CD8-positive, alpha-beta memory T cell (primary cell): ENCODE measurements at regions of chr1 and their contacts with region 1.

Region 1: DNA sequence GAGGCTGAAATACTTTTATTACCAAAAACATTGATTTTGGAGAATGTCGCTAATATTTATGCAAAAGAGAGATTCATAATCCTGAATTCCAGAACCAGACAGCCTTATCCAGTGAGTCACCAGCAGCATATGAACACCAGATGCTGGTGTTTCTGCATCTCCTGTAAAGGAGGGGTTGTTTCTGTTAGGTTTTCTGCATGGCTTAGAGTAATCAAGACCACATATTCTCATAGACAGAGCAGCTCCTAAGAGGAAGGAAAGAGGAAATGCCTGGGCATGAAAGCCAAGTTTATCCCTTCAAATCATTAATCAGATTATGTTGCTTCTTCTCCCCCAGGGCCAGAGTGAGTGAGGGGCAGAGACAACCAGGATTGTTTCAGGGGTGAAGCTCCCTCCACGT is 86.2 kb downstream of the NGF start:
- DNase-seq: no peak
- H3K4me3 ChIP-seq: no peak overlapping the region
- H3K4me3 Mint-ChIP-seq: no peak overlapping the region
- H3K27ac ChIP-seq: no peak overlapping the region
- H3K27ac Mint-ChIP-seq: no peak overlapping the region
- H3K4me1 ChIP-seq: no peaks in the 10 kb centered on the region
- H3K4me1 Mint-ChIP-seq: no peaks in the 10 kb centered on the region
- H3K27me3 ChIP-seq: no peaks in the 10 kb centered on the region
- H3K27me3 Mint-ChIP-seq: peaks cover 10 to 13% of the 10 kb centered on the region in 2 donors

Region 2: DNA sequence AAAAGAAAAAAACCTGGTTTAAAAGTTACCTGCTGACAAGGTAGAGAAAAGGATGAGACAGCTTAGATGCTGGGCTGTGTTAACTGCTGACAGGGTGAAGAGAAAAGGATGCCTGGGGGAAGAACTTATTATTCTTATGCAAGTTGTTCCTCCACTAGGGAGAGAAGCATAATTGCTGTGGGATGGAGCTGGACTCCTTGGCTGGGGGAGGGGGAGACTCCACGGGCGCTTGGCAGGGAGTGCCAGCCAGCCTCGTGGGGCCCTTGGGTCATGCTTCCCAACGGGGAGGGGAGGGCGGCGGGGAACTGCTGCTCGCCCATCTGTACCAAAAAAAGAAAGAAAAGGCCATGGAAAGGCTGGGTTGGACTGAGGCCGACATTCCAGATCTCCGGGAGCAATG is 350.0 kb before region 1 on chr1:
- CTCF ChIA-PET with region 1: no interaction called
- POLR2A ChIA-PET with region 1: no interaction called
- DNase-seq: no peak
- H3K4me3 ChIP-seq: no peak overlapping the region
- H3K4me3 Mint-ChIP-seq: no peak overlapping the region
- H3K27ac ChIP-seq: no peak overlapping the region
- H3K27ac Mint-ChIP-seq: peak overlapping the region in 1 of 8 donors; percentile 17
- H3K4me1 ChIP-seq: no peaks in the 10 kb centered on the region
- H3K4me1 Mint-ChIP-seq: no peaks in the 10 kb centered on the region
- H3K27me3 ChIP-seq: no peaks in the 10 kb centered on the region
- H3K27me3 Mint-ChIP-seq: peaks cover 13 to 21% of the 10 kb centered on the region in 2 donors

Region 3: DNA sequence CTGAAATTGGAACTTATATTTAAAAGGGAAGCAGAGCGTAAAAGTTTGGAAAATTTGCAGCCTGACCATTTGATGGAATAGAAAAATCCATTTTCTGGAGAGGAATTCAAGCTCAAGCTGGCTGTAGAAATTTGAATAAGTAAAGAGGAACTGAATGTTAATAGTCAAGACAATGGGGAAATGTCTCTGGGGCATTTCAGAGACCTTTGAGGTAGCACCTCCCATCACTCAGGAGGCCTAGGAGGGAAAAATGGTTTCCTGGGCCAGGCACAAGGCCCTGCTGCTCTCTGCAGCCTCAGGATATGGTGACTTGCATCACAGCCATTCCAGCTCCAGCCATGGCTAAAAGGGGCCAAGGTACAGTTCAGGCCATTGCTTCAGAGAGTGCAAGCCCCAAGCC is 239.8 kb before region 1 on chr1:
- CTCF ChIA-PET with region 1: no interaction called
- POLR2A ChIA-PET with region 1: no interaction called
- DNase-seq: no peak
- H3K4me3 ChIP-seq: no peak overlapping the region
- H3K4me3 Mint-ChIP-seq: no peak overlapping the region
- H3K27ac ChIP-seq: no peak overlapping the region
- H3K27ac Mint-ChIP-seq: no peak overlapping the region
- H3K4me1 ChIP-seq: no peaks in the 10 kb centered on the region
- H3K4me1 Mint-ChIP-seq: no peaks in the 10 kb centered on the region
- H3K27me3 ChIP-seq: no peaks in the 10 kb centered on the region
- H3K27me3 Mint-ChIP-seq: peaks cover 1 to 8% of the 10 kb centered on the region in 2 donors

Region 4: GRCh38 chr1:115156826-115157468 is 94.9 kb before region 1 on chr1:
- CTCF ChIA-PET with region 1: no interaction called
- POLR2A ChIA-PET with region 1: interaction called, 10 read pairs
- DNase-seq: no peak
- H3K4me3 ChIP-seq: no peak overlapping the region
- H3K4me3 Mint-ChIP-seq: no peak overlapping the region
- H3K27ac ChIP-seq: no peak overlapping the region
- H3K27ac Mint-ChIP-seq: no peak overlapping the region
- H3K4me1 ChIP-seq: no peaks in the 10 kb centered on the region
- H3K4me1 Mint-ChIP-seq: no peaks in the 10 kb centered on the region
- H3K27me3 ChIP-seq: no peaks in the 10 kb centered on the region
- H3K27me3 Mint-ChIP-seq: no peaks in the 10 kb centered on the region

Region 5: DNA sequence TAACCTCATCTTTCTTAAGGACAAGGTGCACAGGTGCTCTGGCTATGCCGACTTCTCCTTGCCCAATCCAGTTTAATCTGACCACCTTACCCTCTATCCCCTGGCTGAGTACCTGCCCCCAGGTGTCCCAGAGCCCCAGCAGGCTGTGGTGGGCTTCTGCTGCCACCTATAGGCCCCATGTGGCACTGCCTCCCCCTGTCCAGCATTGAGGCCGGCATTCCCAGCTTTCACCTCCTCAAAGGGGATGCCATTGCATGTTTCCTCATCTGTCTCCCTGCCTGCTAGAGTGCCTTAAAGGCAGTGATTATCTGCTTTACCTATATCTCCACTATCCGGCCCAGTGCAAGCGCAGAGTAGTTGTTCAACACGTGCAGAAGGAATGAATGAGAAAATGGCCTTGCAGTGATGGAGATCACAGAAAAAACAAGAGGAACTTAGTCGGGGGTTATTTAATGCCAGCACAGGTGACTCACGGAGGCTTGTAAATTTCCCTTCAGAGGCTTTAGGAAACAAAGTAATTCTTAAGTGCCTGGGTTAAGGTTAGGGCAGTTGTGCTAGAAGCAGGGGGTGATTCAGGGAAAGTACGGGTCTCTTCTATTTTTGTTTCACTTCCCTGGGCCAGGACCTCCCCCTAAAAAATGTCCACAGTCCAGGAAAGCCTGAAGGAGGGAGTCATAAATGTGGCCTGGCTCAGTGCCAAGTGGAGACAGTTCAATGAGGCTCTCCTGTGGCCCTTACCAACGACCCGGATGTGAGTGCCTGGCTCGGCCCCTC is 218.0 kb after region 1 on chr1:
- CTCF ChIA-PET with region 1: no interaction called
- POLR2A ChIA-PET with region 1: no interaction called
- DNase-seq: peak in 1 of 5 donors; percentile 14
- H3K4me3 ChIP-seq: no peak overlapping the region
- H3K4me3 Mint-ChIP-seq: no peak overlapping the region
- H3K27ac ChIP-seq: no peak overlapping the region
- H3K27ac Mint-ChIP-seq: peak overlapping the region in 1 of 8 donors; percentile 26
- H3K4me1 ChIP-seq: no peaks in the 10 kb centered on the region
- H3K4me1 Mint-ChIP-seq: peaks cover 0 to 13% (median 5%) of the 10 kb centered on the region in 3 donors
- H3K27me3 ChIP-seq: no peaks in the 10 kb centered on the region
- H3K27me3 Mint-ChIP-seq: peaks cover 2 to 14% of the 10 kb centered on the region in 2 donors